Motor neuron (in vitro differentiated cells): ENCODE measurements at regions of chr18 and their contacts with region 1.

Region 1: DNA sequence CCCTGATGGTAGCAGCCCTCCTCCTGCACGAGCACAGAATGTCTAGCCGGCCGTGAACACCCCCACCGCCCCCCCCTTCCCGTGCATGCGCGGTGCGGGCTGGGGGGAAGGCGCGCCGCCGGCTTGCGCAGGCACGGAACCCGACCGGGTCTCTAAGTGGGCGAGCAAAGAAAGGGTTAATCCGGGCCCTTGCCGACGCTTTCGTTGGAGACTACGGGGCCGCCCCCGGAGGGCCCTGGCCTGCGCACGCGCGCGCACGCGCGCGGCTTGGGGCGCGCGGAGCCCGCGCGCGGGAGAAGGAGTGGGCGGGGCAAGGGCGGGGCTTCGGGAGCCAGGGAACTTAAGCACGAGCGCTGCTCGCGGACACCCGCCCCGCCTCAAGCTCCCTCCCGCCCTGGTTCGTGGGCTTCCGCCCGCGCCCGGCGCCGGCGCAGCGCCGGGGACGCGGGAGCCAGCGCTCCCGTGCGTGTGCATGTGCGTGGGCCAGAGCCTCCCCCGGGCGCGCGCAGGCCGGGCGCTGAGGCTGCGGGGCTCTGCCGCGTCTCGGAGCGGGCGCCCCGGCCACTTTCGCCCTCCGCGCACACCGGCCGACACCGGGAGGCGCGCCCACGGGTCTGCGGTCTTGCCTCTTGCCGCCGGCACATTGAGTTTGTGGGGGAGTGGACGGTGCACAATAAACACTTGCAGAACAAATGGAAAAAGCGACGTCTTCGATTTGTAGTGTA is 617 bp upstream of the ZBTB14 start:
- ATAC-seq: peak; percentile 55 to 78 (median 74)
- H3K4me3 ChIP-seq: peak overlapping the region; percentile 51 to 83 (median 63)
- H3K27ac ChIP-seq: peak overlapping the region; percentile 93 to 94
- H3K4me1 ChIP-seq: peaks cover 6 to 13% of the 10 kb centered on the region in 2 donors

Region 2: GRCh38 chr18:5244941-5245340 is 51.2 kb before region 1 on chr18:
- in situ Hi-C with region 1: loop called in 1 of 9 experiments (anchors 10 kb)
- ATAC-seq: peak in 1 of 8 experiments; percentile 49
- H3K4me3 ChIP-seq: no peak overlapping the region
- H3K27ac ChIP-seq: no peak overlapping the region
- H3K4me1 ChIP-seq: peaks cover 6 to 12% of the 10 kb centered on the region in 2 donors

Region 3: GRCh38 chr18:5503740-5504139 is 207.6 kb after region 1 on chr18:
- in situ Hi-C with region 1: no loop called
- ATAC-seq: no peak
- H3K4me3 ChIP-seq: no peak overlapping the region
- H3K27ac ChIP-seq: no peak overlapping the region
- H3K4me1 ChIP-seq: peaks cover 0 to 3% of the 10 kb centered on the region in 2 donors